Naive thymus-derived CD4-positive, alpha-beta T cell (primary cell): ENCODE measurements at regions of chr4 and their contacts with region 1.

Region 1: GRCh38 chr4:77734928-77735327 is 84.2 kb downstream of the CNOT6L start:
- DNase-seq: peak in 8 of 9 donors; percentile 9 to 34 (median 18)
- ATAC-seq: peak; percentile 80
- H3K4me3 ChIP-seq: no peak overlapping the region
- H3K4me3 Mint-ChIP-seq: peak overlapping the region in 9 of 10 donors; percentile 53 to 83 (median 71)
- H3K27ac ChIP-seq: peak overlapping the region; percentile 25
- H3K27ac Mint-ChIP-seq: peak overlapping the region; percentile 18 to 90 (median 81)
- H3K4me1 ChIP-seq: peaks cover 14 to 17% of the 10 kb centered on the region in 2 donors
- H3K4me1 Mint-ChIP-seq: peaks cover 36 to 85% (median 73%) of the 10 kb centered on the region in 7 donors
- H3K27me3 ChIP-seq: no peaks in the 10 kb centered on the region
- H3K27me3 Mint-ChIP-seq: no peaks in the 10 kb centered on the region

Region 2: DNA sequence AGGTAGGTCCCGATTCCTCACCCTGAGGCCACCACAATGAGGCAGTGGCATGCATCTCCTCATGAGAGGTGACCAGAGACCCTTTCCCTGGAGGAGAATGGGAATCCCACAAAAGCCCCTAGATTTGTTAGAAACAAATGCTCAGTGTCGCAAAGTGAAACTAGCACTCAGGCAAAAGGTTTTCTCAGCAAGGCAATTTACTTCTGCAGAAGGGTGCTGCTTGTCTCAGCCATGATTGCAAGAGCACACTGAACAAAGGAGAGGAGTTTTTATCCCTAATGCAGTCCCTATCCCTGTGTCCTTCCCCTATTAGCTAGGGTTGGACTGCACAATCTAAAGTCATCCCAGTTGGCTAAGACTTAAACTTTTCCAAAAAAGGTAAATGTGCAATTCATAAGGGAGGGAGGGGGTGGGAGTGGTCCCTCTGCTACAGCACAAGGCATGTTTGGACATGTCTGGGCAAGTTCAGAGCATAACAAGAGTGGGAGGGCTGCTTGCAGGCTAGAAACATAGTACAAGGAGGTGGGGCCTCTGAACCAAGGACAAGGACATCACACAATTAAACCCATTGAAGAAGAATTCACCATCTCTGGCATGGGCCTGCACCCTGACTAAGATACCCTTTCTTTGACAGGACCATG is 392.6 kb before region 1 on chr4:
- CTCF ChIA-PET with region 1: no interaction called
- POLR2A ChIA-PET with region 1: no interaction called
- intact Hi-C with region 1: no loop called
- DNase-seq: no peak
- ATAC-seq: no peak
- H3K4me3 ChIP-seq: no peak overlapping the region
- H3K4me3 Mint-ChIP-seq: no peak overlapping the region
- H3K27ac ChIP-seq: no peak overlapping the region
- H3K27ac Mint-ChIP-seq: no peak overlapping the region
- H3K4me1 ChIP-seq: no peaks in the 10 kb centered on the region
- H3K4me1 Mint-ChIP-seq: no peaks in the 10 kb centered on the region
- H3K27me3 ChIP-seq: no peaks in the 10 kb centered on the region
- H3K27me3 Mint-ChIP-seq: peaks cover 10 to 45% (median 29%) of the 10 kb centered on the region in 5 donors

Region 3: DNA sequence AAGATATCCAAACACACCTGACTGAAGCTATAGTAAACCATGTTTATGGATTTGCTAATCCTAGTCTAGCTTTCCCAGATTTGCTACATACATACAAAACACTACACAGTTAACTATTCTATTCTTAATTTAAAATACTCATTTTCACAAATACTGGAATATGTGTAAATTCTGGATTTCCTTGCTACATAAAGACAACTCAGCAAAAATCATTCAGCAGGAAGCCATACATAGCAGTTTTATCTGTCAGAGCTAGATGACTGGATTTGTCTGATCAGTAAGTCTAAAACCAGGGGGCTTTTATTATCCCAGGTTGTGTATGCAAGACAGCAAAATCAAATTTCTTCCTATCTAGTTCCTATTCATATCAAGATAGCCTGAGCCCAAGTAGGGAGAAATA is 13.9 kb before region 1 on chr4:
- CTCF ChIA-PET with region 1: no interaction called
- POLR2A ChIA-PET with region 1: interaction called, 3 read pairs
- intact Hi-C with region 1: loop called (anchors 2 kb)
- DNase-seq: no peak
- ATAC-seq: no peak
- H3K4me3 ChIP-seq: no peak overlapping the region
- H3K4me3 Mint-ChIP-seq: no peak overlapping the region
- H3K27ac ChIP-seq: no peak overlapping the region
- H3K27ac Mint-ChIP-seq: peak overlapping the region in 3 of 9 donors; percentile 5 to 25 (median 25)
- H3K4me1 ChIP-seq: no peaks in the 10 kb centered on the region
- H3K4me1 Mint-ChIP-seq: peaks cover 5 to 42% (median 18%) of the 10 kb centered on the region in 7 donors
- H3K27me3 ChIP-seq: no peaks in the 10 kb centered on the region
- H3K27me3 Mint-ChIP-seq: no peaks in the 10 kb centered on the region

Region 4: DNA sequence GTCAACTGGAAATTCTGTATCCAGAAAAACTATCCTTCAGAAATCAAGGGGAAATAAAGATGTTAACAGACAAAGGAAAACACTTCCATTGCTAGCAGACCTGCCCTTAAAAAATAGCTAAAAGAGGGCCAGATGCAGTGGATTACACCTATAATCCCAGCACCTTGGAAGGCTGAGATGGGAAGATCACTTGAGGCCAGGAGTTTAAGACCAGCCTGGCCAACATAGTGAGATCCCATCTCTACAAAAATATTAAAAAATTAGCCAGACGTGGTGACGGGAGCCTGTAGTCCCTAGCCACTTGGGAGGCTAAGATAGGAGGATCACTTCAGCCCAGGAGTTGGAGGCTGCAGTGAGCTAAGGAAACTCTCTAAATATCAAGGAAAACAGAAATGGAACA is 16.8 kb after region 1 on chr4:
- CTCF ChIA-PET with region 1: no interaction called
- POLR2A ChIA-PET with region 1: interaction called, 3 read pairs
- intact Hi-C with region 1: loop called in 1 of 2 experiments (anchors 2 kb)
- DNase-seq: no peak
- ATAC-seq: no peak
- H3K4me3 ChIP-seq: no peak overlapping the region
- H3K4me3 Mint-ChIP-seq: peak overlapping the region in 2 of 10 donors; percentile 4 to 14
- H3K27ac ChIP-seq: no peak overlapping the region
- H3K27ac Mint-ChIP-seq: peak overlapping the region in 2 of 9 donors; percentile 46 to 77
- H3K4me1 ChIP-seq: peaks cover 0 to 6% of the 10 kb centered on the region in 2 donors
- H3K4me1 Mint-ChIP-seq: peaks cover 7 to 57% (median 40%) of the 10 kb centered on the region in 7 donors
- H3K27me3 ChIP-seq: no peaks in the 10 kb centered on the region
- H3K27me3 Mint-ChIP-seq: no peaks in the 10 kb centered on the region